ENCODE measurements at regions of chr3 and their contacts with region 1.

Region 1: DNA sequence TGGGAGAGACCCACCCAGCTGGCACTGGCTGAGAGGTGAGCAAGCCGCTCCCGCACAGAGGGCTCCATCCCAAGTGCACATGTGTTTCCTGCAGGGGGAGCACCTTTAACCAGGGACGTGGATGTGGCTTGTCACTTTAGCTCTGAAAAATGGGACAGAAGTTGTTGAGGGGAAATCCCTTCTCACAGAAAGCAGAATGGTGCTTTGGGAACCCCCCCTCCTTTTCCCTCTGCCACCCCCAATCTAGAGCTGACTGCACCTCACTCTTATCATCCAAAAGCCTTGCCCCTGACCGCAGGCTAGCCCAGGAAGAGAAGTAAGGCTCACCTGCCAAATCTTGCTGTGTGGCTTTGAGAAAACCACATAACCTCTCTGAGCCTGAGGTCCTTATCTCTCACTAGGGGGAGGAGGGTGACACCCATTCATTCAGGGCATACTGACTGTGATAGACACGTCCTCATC is 77.9 kb downstream of the RPN1 start:
- DNase-seq: peak; percentile 68
- H3K4me3 Mint-ChIP-seq: no peak overlapping the region
- H3K27ac Mint-ChIP-seq: peak overlapping the region; percentile 45
- H3K4me1 Mint-ChIP-seq: peaks cover 18% of the 10 kb centered on the region
- H3K27me3 Mint-ChIP-seq: peaks cover 11% of the 10 kb centered on the region

Region 2: DNA sequence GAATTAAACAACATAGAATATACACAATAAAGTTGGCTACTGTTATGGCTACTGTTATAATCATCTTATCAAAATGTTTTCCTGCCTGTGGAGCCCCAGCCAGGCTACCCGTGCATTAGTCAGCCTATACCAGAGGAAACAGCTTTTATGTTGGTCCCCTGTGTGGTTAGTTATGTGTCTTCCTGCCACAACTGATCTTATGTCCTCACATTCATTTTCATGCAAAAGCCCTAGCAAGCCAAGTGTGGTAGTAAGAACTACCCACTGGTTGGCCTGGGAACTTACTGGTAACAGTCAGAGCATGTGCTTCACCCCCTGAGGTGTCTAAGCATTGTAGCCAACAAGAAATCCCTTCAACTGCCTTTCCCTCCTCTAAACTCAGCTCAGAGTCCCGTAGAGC is 772.2 kb before region 1 on chr3:
- CTCF ChIA-PET with region 1: no interaction called
- POLR2A ChIA-PET with region 1: no interaction called
- intact Hi-C with region 1: no loop called
- DNase-seq: peak; percentile 10
- H3K4me3 Mint-ChIP-seq: no peak overlapping the region
- H3K27ac Mint-ChIP-seq: no peak overlapping the region
- H3K4me1 Mint-ChIP-seq: peaks cover 5% of the 10 kb centered on the region
- H3K27me3 Mint-ChIP-seq: no peaks in the 10 kb centered on the region

Region 3: DNA sequence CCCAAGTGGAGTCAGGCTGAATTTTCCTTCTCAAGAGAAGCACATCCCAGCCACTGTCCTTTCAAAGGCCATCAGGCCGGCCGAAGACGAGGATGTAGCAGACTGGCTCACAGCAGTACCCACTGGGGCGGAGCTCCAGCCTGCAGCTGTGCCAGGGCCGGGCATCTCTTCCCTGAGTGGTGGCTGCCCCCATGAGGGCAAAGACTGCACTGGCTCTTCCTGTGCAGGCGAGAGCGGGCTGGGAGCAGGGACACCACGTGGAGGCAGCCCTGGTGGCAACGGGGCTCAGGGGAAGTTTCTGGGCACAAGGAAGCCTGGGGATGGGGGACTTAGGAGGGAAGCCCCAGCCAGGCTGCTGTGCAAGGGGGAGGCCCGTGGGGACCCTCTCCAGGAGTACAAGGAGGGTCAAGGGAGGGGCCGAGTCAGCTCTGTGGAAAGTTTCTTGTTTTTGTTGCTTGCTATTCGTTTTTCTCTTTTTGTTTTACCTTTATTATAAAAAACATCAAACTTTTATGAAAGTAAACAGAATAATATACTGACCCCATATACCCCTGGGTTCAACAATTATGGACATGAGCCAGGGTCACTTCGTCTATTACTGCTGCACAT is 11.8 kb after region 1 on chr3:
- CTCF ChIA-PET with region 1: interaction called, 11 read pairs
- POLR2A ChIA-PET with region 1: no interaction called
- intact Hi-C with region 1: no loop called
- DNase-seq: peak; percentile 66
- H3K4me3 Mint-ChIP-seq: no peak overlapping the region
- H3K27ac Mint-ChIP-seq: no peak overlapping the region
- H3K4me1 Mint-ChIP-seq: peaks cover 3% of the 10 kb centered on the region
- H3K27me3 Mint-ChIP-seq: peaks cover 9% of the 10 kb centered on the region

Region 4: GRCh38 chr3:128607710-128608048 is 35.0 kb after region 1 on chr3:
- CTCF ChIA-PET with region 1: interaction called, 7 read pairs
- POLR2A ChIA-PET with region 1: no interaction called
- intact Hi-C with region 1: loop called (anchors 5 kb)
- DNase-seq: no peak
- H3K4me3 Mint-ChIP-seq: no peak overlapping the region
- H3K27ac Mint-ChIP-seq: no peak overlapping the region
- H3K4me1 Mint-ChIP-seq: peaks cover 2% of the 10 kb centered on the region
- H3K27me3 Mint-ChIP-seq: no peaks in the 10 kb centered on the region

Measured in activated CD4-positive, alpha-beta memory T cell treated with anti-CD3 and anti-CD28 coated beads for 36 hours (primary cell).